HEK293 (cell line): ENCODE measurements at regions of chr18 and their contacts with region 1.

Region 1: GRCh38 chr18:70195852-70196434 is 9.5 kb downstream of the RTTN start:
- H3K4me3 ChIP-seq: no peak overlapping the region
- H3K27ac ChIP-seq: no peak overlapping the region
- H3K4me1 ChIP-seq: no peaks in the 10 kb centered on the region
- CTCF ChIP-seq: peak; percentile 46; the same call in 1 of the 2 replicates

Region 2: GRCh38 chr18:69648486-69648885 is 547.5 kb before region 1 on chr18:
- CTCF ChIA-PET with region 1: no interaction called
- POLR2A ChIA-PET with region 1: no interaction called
- H3K4me3 ChIP-seq: no peak overlapping the region
- H3K27ac ChIP-seq: no peak overlapping the region
- H3K4me1 ChIP-seq: no peaks in the 10 kb centered on the region
- CTCF ChIP-seq: no peak

Region 3: GRCh38 chr18:70169747-70170146 is 26.2 kb before region 1 on chr18:
- CTCF ChIA-PET with region 1: interaction called, 12 read pairs
- POLR2A ChIA-PET with region 1: no interaction called
- H3K4me3 ChIP-seq: no peak overlapping the region
- H3K27ac ChIP-seq: no peak overlapping the region
- H3K4me1 ChIP-seq: no peaks in the 10 kb centered on the region
- CTCF ChIP-seq: no peak